GM10248 (cell line): ENCODE measurements at regions of chr15 and their contacts with region 1.

Region 1: DNA sequence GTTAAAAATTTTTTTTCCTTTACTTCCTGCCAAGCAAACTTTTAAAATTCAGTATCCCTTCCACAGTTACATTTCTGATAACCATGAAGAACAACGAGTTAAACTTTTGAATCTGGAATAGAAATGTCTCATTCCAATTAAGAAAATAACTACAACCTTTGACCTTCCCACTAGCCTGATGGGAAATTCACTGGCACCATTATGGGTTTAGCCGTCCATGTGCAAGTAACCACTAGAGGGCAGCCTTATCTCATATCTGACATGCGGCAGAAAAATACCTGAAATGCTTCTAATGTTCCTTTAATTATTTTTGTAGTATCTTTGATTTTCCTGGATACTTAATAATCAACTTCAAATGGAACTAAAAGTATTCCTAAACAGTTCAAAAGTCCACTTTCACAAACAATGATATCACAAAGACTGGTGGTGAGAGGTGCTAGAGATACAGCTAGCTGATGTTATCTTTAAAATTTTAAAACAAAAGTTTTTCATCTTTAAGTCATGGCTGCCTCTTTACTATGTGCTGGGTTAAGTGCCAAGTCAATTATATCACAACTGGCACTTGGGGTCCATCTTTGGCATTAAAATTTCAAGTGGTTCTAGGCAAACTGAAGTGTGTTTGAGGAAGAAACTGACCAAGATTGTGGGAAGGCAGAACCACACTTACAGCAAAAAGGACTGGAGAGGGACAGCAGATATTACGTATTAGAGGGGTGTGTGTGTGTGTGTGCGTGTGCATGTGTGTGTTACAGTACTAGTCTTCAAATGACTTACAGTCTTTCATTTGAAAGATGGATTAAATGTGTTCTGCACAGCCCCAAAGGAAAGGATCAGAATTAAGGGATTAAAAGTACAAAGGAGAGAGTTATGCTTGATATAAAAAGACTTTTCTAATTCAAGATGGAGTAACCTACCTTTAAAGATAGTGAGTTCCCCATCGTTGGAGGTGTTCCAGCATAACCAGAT is 107.1 kb upstream of the ICE2 start:
- DNase-seq: peak; percentile 44
- CTCF ChIP-seq: peak; percentile 78

Region 2: DNA sequence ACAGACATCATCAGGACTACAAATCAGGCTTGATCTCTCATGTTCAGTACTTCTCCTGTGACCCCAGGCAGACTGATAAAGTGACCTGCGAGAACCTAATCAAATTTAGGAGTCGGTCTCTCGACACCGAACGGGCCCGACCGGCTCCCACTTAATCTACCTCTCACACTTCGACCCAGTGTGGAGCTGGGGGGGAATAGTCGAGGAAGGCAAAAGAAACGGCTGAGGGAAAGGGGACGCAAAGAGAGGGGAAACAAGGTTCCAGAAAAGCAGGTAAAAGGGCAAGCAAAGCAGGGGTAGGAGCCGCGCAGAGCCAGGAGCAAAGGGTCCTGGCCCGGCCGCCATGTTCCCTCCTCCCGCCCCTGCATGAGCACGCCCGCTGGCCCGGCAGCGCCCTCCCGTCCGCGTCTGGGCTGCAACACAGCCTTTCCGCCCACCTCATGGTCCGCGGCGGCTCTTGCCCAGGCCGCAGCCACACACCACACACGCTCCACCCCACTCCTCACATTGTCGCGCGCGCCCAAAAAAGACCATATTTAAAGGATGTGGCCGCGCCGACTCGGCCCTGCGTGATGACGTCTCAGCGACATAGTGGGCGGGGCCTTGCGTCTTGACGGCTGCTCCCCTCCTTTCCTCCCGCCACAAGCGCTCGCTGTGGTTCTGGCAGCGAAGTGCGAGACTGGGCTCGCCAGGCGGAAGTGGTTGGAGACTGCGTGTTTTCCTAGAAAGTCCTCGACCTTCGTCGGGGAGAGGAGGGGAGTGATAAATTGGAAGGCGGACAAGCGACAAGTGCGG is 107.3 kb before region 1 on chr15 and contains the start of gene ICE2:
- CTCF ChIA-PET with region 1: no interaction called
- POLR2A ChIA-PET with region 1: no interaction called
- DNase-seq: peak; percentile 92
- CTCF ChIP-seq: peak; percentile 12

Region 3: GRCh38 chr15:60573936-60574335 is 12.1 kb before region 1 on chr15:
- CTCF ChIA-PET with region 1: interaction called, 73 read pairs
- POLR2A ChIA-PET with region 1: no interaction called
- DNase-seq: no peak
- CTCF ChIP-seq: no peak